ENCODE measurements at regions of chr12 and their contacts with region 1.

Region 1: GRCh38 chr12:69639400-69640016 is 28.8 kb upstream of the LRRC10 start:
- DNase-seq: peak; percentile 40 to 53 (median 46)
- H3K4me3 ChIP-seq: no peak overlapping the region
- H3K4me3 Mint-ChIP-seq: no peak overlapping the region
- H3K27ac ChIP-seq: no peak overlapping the region
- H3K27ac Mint-ChIP-seq: peak overlapping the region in 1 of 7 donors; percentile 59
- H3K4me1 ChIP-seq: no peaks in the 10 kb centered on the region
- H3K4me1 Mint-ChIP-seq: peaks cover 0 to 2% (median 0%) of the 10 kb centered on the region in 4 donors
- H3K27me3 ChIP-seq: no peaks in the 10 kb centered on the region
- H3K27me3 Mint-ChIP-seq: no peaks in the 10 kb centered on the region

Region 2: DNA sequence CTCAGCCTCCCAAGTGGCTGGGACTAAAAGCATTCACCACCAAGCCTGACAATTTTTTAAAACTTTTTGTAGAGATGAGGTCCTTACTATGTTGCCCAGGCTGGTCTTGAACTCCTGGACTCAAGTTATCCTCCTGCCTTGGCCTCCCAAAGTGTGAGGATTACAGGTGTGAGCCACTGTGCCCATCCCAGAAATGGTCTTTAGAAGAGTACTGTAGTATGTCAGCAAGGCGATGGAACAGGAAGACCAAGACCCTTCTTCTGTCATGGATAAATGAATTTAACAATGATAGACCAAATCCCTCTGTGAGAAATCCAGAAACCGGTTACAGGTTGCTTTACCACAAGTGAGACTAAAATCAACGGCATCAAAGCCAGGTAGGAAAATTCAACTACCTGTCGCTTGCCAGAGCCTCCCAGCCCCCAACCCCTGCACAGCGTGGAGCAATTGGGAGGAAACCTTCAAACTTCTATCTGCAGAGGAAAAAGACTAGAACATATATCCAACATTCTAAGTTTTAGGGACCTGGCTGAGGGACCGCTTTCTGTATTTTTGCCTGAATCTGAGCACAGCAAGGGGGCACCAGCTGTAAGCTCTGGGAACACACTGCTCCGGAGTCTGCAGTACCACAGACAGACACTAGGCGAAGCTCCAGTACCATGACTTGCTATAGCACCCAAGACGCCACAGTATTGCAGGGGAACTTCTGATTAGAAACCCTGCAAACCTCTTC is 348.8 kb before region 1 on chr12:
- CTCF ChIA-PET with region 1: interaction called, 22 read pairs
- POLR2A ChIA-PET with region 1: no interaction called
- intact Hi-C with region 1: loop called (anchors 1 kb)
- DNase-seq: peak; percentile 72 to 76 (median 74)
- H3K4me3 ChIP-seq: no peak overlapping the region
- H3K4me3 Mint-ChIP-seq: peak overlapping the region in 1 of 8 donors; percentile 30
- H3K27ac ChIP-seq: no peak overlapping the region
- H3K27ac Mint-ChIP-seq: peak overlapping the region in 1 of 7 donors; percentile 49
- H3K4me1 ChIP-seq: no peaks in the 10 kb centered on the region
- H3K4me1 Mint-ChIP-seq: peaks cover 6 to 9% (median 7%) of the 10 kb centered on the region in 4 donors
- H3K27me3 ChIP-seq: peaks cover 5% of the 10 kb centered on the region
- H3K27me3 Mint-ChIP-seq: peaks cover 25 to 29% of the 10 kb centered on the region in 2 donors

Region 3: GRCh38 chr12:71303199-71303598 is 1663.7 kb after region 1 on chr12:
- CTCF ChIA-PET with region 1: no interaction called
- POLR2A ChIA-PET with region 1: no interaction called
- intact Hi-C with region 1: no loop called
- DNase-seq: no peak
- H3K4me3 ChIP-seq: no peak overlapping the region
- H3K4me3 Mint-ChIP-seq: no peak overlapping the region
- H3K27ac ChIP-seq: no peak overlapping the region
- H3K27ac Mint-ChIP-seq: no peak overlapping the region
- H3K4me1 ChIP-seq: no peaks in the 10 kb centered on the region
- H3K4me1 Mint-ChIP-seq: no peaks in the 10 kb centered on the region
- H3K27me3 ChIP-seq: no peaks in the 10 kb centered on the region
- H3K27me3 Mint-ChIP-seq: peaks cover 0 to 3% of the 10 kb centered on the region in 2 donors